Breast epithelium (tissue), 4 donors: ENCODE measurements at regions of chr1 and their contacts with region 1.

Region 1: DNA sequence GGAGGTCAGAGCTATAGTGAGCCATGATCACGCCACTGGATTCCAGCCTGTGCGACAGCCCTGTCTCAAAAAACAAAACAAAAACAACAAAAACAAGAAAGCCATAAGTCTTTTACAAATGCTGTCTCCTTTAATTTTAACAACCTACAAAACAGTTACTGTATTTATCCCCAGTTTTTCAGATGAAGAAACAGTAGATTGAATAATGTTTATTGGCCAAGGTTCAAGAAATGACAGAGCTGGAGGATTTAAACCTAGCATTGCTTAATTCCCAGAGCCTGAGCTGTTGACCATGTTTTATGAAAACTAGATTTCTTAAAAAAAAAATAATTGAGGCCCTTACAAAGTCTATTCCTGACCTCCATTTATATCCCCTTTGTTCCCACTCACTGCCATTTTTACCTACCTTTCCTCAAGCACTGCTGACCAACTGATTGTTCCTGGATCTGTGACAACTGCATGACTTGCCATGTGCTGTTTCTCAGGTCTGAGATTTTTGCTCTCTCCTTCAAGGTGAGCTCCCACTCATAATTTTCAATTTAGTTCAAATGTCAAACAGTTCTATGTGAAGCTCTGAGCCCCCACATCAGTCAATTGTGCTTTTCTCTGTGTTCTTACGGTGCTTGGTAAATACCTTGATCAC is 140.8 kb downstream of the CHRM3 start:
- DNase-seq: no peak
- H3K4me3 ChIP-seq: no peak overlapping the region
- H3K27ac ChIP-seq: no peak overlapping the region
- H3K4me1 ChIP-seq: no peaks in the 10 kb centered on the region
- H3K27me3 ChIP-seq: no peaks in the 10 kb centered on the region
- CTCF ChIP-seq: no peak
- POLR2A ChIP-seq: no peak

Region 2: GRCh38 chr1:238658763-238659162 is 868.4 kb before region 1 on chr1:
- intact Hi-C with region 1: loop called (anchors 5 kb)
- DNase-seq: no peak
- H3K4me3 ChIP-seq: no peak overlapping the region
- H3K27ac ChIP-seq: no peak overlapping the region
- H3K4me1 ChIP-seq: no peaks in the 10 kb centered on the region
- H3K27me3 ChIP-seq: no peaks in the 10 kb centered on the region
- CTCF ChIP-seq: no peak
- POLR2A ChIP-seq: no peak